Activated naive CD4-positive, alpha-beta T cell treated with anti-CD3 and anti-CD28 coated beads for 36 hours (primary cell): ENCODE measurements at regions of chr2 and their contacts with region 1.

Region 1: GRCh38 chr2:20015472-20016083 is 3.1 kb upstream of the MATN3 start:
- DNase-seq: no peak
- H3K4me3 Mint-ChIP-seq: no peak overlapping the region
- H3K27ac Mint-ChIP-seq: no peak overlapping the region
- H3K4me1 Mint-ChIP-seq: peaks cover 8% of the 10 kb centered on the region
- H3K27me3 Mint-ChIP-seq: peaks cover 28% of the 10 kb centered on the region

Region 2: DNA sequence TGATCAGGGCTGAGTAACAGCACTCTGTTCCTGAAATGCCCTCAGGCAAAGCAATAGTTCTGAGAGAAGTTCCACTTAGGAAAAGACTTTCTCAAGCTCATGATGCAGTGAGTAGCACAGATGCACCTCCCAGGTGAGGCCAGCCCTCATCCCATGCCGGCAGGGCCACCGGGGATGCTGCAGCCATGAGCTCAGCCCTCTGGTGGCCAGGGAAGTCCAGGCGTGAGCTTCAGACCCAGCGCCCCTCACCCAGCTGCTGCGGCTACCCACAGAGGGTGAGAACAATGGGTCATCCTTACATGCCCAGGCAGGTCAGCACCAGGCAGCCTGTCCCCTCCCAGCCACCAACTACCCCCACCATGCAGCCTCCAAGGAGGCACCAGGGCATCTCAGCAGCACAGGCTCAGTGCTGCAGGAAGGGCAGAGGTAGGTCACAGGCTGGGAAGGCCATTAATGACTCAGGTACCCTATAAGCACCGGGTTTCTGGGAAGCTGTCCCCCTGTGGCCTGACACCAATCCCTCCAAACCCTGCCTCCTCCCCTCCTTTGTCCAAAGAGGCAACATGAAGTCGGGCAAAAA is 164.4 kb before region 1 on chr2:
- CTCF ChIA-PET with region 1: no interaction called
- intact Hi-C with region 1: no loop called
- DNase-seq: no peak
- H3K4me3 Mint-ChIP-seq: no peak overlapping the region
- H3K27ac Mint-ChIP-seq: no peak overlapping the region
- H3K4me1 Mint-ChIP-seq: no peaks in the 10 kb centered on the region
- H3K27me3 Mint-ChIP-seq: no peaks in the 10 kb centered on the region

Region 3: GRCh38 chr2:19955544-19956422 is 59.8 kb before region 1 on chr2:
- CTCF ChIA-PET with region 1: interaction called, 3 read pairs
- intact Hi-C with region 1: loop called (anchors 1 kb)
- DNase-seq: peak; percentile 68
- H3K4me3 Mint-ChIP-seq: no peak overlapping the region
- H3K27ac Mint-ChIP-seq: no peak overlapping the region
- H3K4me1 Mint-ChIP-seq: no peaks in the 10 kb centered on the region
- H3K27me3 Mint-ChIP-seq: no peaks in the 10 kb centered on the region

Region 4: DNA sequence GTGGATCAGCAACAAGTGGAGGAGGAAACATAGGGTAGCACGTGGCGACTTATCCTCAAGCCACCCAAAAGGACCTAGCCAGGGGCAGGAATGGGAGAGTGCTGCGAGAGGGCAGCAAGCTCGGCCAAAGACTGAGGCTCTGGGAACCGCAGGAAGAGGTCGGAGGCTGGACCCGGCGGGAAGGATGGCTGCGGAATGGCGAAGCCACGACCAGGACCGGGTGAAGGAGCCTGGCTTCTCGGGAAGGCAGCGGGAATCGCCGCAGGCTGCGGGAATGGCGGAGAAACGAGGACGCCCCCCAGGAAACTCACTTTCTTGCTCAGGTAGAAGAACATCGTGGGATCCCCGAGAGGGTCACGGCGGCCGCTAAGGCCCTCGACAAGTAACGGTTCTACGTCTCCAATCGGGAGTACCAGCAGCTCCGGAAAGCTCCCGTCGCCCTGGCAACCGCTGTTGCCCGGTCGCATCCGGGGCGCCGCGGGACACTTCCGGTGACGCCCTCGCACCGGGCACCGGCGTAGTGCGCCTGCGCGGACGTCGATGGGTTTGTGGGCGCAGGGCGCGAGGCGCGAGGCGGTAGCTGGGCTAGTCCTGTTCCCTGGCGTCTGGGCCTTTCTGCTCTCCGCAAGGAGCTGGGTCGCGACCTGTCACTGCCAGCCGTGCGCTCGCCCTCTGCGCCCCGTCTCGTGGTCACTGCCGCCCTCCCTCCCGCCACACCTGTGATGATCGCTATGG is 25.7 kb before region 1 on chr2 and contains the start of gene WDR35:
- CTCF ChIA-PET with region 1: interaction called, 10 read pairs
- intact Hi-C with region 1: no loop called
- DNase-seq: peak; percentile 91
- H3K4me3 Mint-ChIP-seq: peak within 1 kb of the TSS; percentile 87
- H3K27ac Mint-ChIP-seq: peak within 1 kb of the TSS; percentile 54
- H3K4me1 Mint-ChIP-seq: peaks cover 28% of the 10 kb centered on the region
- H3K27me3 Mint-ChIP-seq: peaks cover 13% of the 10 kb centered on the region
- total RNA-seq, gene WDR35: 4.3 to 4.4 TPM

Region 5: DNA sequence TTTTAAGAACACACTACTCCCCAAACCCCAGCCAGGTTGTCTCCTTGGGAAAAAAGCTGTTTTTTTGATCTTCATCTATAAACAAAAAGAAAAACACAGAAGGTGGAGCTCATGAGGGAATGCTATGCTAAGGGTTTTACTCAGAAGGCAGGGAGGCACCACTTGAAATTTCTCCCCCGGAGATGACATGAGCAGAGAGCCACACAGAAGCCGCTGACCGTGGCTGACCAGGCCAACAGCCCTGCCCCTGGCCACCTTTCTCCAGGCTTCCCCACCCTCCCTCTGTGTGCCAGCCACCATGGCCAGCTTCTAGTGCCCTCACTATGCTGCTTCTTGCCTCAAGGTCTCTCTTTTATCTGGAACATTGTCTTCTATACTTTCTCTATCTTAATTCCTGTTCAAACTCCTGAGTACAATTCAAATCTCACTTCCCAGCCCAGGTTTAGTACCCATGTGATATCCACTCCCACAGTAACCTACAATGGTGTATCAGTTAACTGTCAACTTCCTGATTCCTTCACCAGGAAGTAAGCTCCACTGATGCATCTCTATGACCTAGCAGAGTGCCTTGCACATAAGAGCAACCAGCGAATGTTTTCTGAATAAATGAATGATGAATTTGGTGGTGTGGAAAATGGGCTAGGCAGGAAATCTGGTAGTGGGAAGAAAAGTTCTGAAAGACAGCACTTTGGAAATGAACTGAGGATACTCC is 20.5 kb after region 1 on chr2:
- CTCF ChIA-PET with region 1: interaction called, 12 read pairs
- intact Hi-C with region 1: no loop called
- DNase-seq: no peak
- H3K4me3 Mint-ChIP-seq: no peak overlapping the region
- H3K27ac Mint-ChIP-seq: no peak overlapping the region
- H3K4me1 Mint-ChIP-seq: no peaks in the 10 kb centered on the region
- H3K27me3 Mint-ChIP-seq: no peaks in the 10 kb centered on the region

Region 6: GRCh38 chr2:20097879-20098714 is 82.5 kb after region 1 on chr2:
- CTCF ChIA-PET with region 1: interaction called, 27 read pairs
- intact Hi-C with region 1: loop called (anchors 1 kb)
- DNase-seq: peak; percentile 88
- H3K4me3 Mint-ChIP-seq: no peak overlapping the region
- H3K27ac Mint-ChIP-seq: no peak overlapping the region
- H3K4me1 Mint-ChIP-seq: peaks cover 3% of the 10 kb centered on the region
- H3K27me3 Mint-ChIP-seq: peaks cover 10% of the 10 kb centered on the region

Region 7: DNA sequence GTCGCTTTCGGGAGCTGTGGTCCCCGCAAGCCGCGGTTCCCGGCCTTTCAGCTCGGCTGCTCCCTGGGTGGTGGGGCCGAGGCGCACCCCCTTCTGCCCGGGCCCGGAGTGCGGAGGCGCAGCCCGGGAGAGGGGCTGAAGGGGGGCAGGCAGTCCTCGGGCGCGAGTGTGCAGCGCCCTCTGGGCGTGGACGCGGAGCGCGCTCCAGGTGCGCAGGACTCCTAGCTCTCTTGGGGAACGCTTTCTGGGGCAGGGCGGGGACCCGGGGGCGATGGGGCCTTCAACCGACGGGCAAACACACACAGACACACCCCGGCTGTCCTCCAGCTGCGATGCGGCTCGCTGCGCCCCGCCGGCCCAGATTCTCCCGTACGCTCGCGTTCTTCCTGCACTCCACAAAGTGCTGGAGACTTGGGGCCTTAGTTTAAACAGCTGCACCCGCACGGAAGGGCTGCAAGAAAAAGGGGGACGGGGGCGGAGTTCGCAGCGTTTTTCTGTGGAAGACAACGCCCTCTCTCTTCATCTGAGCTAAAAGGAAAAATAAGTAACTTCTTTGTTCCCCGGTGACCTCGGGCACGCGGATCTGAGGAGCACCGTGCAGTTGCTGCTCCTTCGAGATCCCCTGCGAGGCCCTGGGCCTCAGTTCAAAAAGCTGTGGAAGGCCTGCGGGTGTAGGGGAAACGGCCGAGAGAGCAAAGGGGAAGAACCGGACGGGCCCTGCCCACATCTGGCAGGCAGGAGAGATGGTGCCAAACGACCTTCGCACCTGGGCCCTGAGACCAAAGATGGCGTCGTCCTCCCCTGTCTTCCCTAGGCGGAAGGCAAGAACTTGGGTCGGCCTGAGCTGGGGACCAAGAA is 209.9 kb after region 1 on chr2:
- CTCF ChIA-PET with region 1: interaction called, 3 read pairs
- intact Hi-C with region 1: loop called (anchors 10 kb)
- DNase-seq: peak; percentile 44
- H3K4me3 Mint-ChIP-seq: peak overlapping the region; percentile 55
- H3K27ac Mint-ChIP-seq: no peak overlapping the region
- H3K4me1 Mint-ChIP-seq: peaks cover 6% of the 10 kb centered on the region
- H3K27me3 Mint-ChIP-seq: peaks cover 41% of the 10 kb centered on the region